Endothelial cell of umbilical vein (primary cell): ENCODE measurements at regions of chr1 and their contacts with region 1.

Region 1: GRCh38 chr1:52842643-52843309 is at the start of gene ZYG11A:
- DNase-seq: peak; percentile 81
- H3K4me3 ChIP-seq: peak within 1 kb of the TSS; percentile 28 to 76 (median 62)
- H3K27ac ChIP-seq: no peak within 1 kb of the TSS
- H3K4me1 ChIP-seq: no peaks in the 10 kb centered on the region
- H3K27me3 ChIP-seq: no peaks in the 10 kb centered on the region
- CTCF ChIP-seq: peak in 1 of 2 donors; percentile 44
- POLR2A ChIP-seq: no peak
- total RNA-seq, gene ZYG11A: 1.3 and 2.1 TPM in 2 replicates

Region 2: GRCh38 chr1:52825868-52826267 is 16.9 kb before region 1 on chr1:
- CTCF ChIA-PET with region 1: interaction called, 12 read pairs
- POLR2A ChIA-PET with region 1: no interaction called
- dilution Hi-C with region 1: no loop called
- intact Hi-C with region 1: no loop called
- DNase-seq: peak; percentile 25
- H3K4me3 ChIP-seq: no peak overlapping the region
- H3K27ac ChIP-seq: no peak overlapping the region
- H3K4me1 ChIP-seq: no peaks in the 10 kb centered on the region
- H3K27me3 ChIP-seq: no peaks in the 10 kb centered on the region
- CTCF ChIP-seq: no peak
- POLR2A ChIP-seq: no peak